ENCODE measurements at regions of chr3 and their contacts with region 1.

Region 1: GRCh38 chr3:56758539-56758981 is 43.2 kb downstream of the ARHGEF3 start:
- DNase-seq: no peak
- ATAC-seq: peak; percentile 71
- H3K4me3 Mint-ChIP-seq: peak overlapping the region; percentile 69
- H3K27ac Mint-ChIP-seq: peak overlapping the region; percentile 95
- H3K4me1 Mint-ChIP-seq: peaks cover 62% of the 10 kb centered on the region
- H3K27me3 Mint-ChIP-seq: no peaks in the 10 kb centered on the region
- CTCF ChIP-seq: no peak

Region 2: DNA sequence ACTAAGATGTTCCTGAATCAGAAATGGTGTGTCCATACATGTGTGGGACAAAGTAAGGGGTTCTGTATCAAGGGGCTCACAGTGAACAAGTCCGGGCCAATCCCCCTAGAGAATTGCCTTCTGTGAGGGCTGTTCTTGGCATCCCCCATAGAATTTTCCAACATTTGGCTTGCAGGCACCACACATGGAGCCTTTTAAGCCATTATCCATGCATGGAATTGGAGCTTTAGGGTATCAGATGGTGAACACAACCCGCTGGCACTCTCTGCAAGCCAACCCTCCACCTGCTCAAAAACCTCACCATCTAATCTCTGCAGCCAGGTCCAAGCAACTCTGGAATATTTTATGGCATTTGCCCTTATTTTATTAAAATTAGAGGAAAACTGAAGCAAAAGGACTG is 569.0 kb before region 1 on chr3:
- CTCF ChIA-PET with region 1: no interaction called
- POLR2A ChIA-PET with region 1: no interaction called
- intact Hi-C with region 1: no loop called
- DNase-seq: no peak
- ATAC-seq: no peak
- H3K4me3 Mint-ChIP-seq: no peak overlapping the region
- H3K27ac Mint-ChIP-seq: no peak overlapping the region
- H3K4me1 Mint-ChIP-seq: no peaks in the 10 kb centered on the region
- H3K27me3 Mint-ChIP-seq: peaks cover 4% of the 10 kb centered on the region
- CTCF ChIP-seq: no peak

Region 3: GRCh38 chr3:56775838-56776555 is 17.4 kb after region 1 on chr3:
- CTCF ChIA-PET with region 1: interaction called, 5 read pairs
- POLR2A ChIA-PET with region 1: interaction called, 6 read pairs
- intact Hi-C with region 1: loop called (anchors 2 kb)
- DNase-seq: no peak
- ATAC-seq: peak; percentile 40
- H3K4me3 Mint-ChIP-seq: no peak overlapping the region
- H3K27ac Mint-ChIP-seq: peak overlapping the region; percentile 53
- H3K4me1 Mint-ChIP-seq: peaks cover 53% of the 10 kb centered on the region
- H3K27me3 Mint-ChIP-seq: no peaks in the 10 kb centered on the region
- CTCF ChIP-seq: no peak

Region 4: GRCh38 chr3:56783644-56784447 is 25.3 kb after region 1 on chr3:
- CTCF ChIA-PET with region 1: interaction called, 6 read pairs
- POLR2A ChIA-PET with region 1: interaction called, 53 read pairs
- intact Hi-C with region 1: loop called (anchors 1 kb)
- DNase-seq: peak; percentile 40
- ATAC-seq: peak; percentile 99
- H3K4me3 Mint-ChIP-seq: peak overlapping the region; percentile 32
- H3K27ac Mint-ChIP-seq: peak overlapping the region; percentile 92
- H3K4me1 Mint-ChIP-seq: peaks cover 88% of the 10 kb centered on the region
- H3K27me3 Mint-ChIP-seq: no peaks in the 10 kb centered on the region
- CTCF ChIP-seq: no peak

Region 5: DNA sequence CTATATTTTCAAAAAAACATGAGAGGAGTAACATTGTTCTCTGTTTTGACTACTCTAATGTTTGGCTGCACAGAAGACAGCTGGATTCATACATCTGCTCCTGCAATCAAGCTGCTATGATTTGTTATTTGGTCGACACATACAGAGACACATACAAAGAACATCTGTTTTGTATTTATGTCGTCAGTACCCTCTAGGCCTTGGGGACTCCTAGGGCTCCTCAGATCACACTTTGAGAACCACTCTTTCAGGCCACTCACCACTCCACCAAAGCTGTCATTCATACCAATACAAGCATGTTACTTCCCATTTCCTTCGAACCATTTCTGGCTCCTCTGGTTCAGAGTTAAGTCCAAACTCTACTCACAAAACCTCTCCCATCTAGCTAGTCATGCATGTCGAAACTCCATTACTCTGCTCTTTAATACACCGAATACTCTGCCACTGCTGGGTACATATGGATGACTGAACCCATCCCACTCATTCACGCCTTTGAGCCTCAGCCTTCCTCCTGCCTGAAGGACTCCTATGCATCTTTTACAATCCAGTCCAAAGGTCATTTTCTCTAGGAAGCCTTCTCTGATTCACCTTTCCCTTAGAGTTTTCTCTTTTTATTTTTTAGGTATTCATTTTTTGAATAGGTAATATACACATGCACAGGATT is 146.1 kb after region 1 on chr3:
- CTCF ChIA-PET with region 1: no interaction called
- POLR2A ChIA-PET with region 1: no interaction called
- intact Hi-C with region 1: no loop called
- DNase-seq: no peak
- ATAC-seq: no peak
- H3K4me3 Mint-ChIP-seq: no peak overlapping the region
- H3K27ac Mint-ChIP-seq: no peak overlapping the region
- H3K4me1 Mint-ChIP-seq: peaks cover under 1% of the 10 kb centered on the region
- H3K27me3 Mint-ChIP-seq: no peaks in the 10 kb centered on the region
- CTCF ChIP-seq: no peak

Region 6: GRCh38 chr3:57078344-57078634 is 319.7 kb after region 1 on chr3:
- CTCF ChIA-PET with region 1: no interaction called
- POLR2A ChIA-PET with region 1: no interaction called
- intact Hi-C with region 1: loop called (anchors 5 kb)
- DNase-seq: peak; percentile 65
- ATAC-seq: peak; percentile 85
- H3K4me3 Mint-ChIP-seq: peak overlapping the region; percentile 78
- H3K27ac Mint-ChIP-seq: peak overlapping the region; percentile 62
- H3K4me1 Mint-ChIP-seq: peaks cover 20% of the 10 kb centered on the region
- H3K27me3 Mint-ChIP-seq: peaks cover 50% of the 10 kb centered on the region
- CTCF ChIP-seq: no peak

Region 7: DNA sequence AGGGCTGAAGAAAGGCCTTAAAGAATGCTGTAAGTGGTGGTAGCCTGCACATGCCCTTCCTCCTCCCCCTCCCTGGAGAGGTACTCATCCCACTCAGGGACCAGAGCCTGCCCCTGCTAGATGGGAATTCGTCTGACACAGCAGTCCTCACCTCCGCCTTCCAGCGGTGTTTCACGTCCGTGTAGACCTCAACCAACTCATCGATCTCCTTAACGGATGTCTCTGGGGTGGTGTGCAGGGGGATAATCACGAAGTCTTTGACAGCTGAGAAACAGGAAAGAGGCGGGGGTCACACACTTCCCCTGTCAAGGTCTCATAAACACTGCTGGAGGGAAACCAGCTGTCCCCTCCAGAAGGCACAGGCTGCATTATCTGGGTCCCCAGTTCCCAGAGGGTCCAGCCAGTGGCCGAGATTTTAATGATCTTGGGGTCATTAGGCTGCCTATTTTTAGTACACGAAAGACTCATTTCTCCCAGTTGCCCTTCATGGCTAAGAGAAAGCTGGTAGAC is 1442.3 kb after region 1 on chr3:
- CTCF ChIA-PET with region 1: no interaction called
- POLR2A ChIA-PET with region 1: interaction called, 13 read pairs
- intact Hi-C with region 1: no loop called
- DNase-seq: no peak
- ATAC-seq: no peak
- H3K4me3 Mint-ChIP-seq: peak overlapping the region; percentile 64
- H3K27ac Mint-ChIP-seq: peak overlapping the region; percentile 70
- H3K4me1 Mint-ChIP-seq: peaks cover 66% of the 10 kb centered on the region
- H3K27me3 Mint-ChIP-seq: no peaks in the 10 kb centered on the region
- CTCF ChIP-seq: no peak

Measured in activated B cell treated with CpG ODN at 0.5 μM for 24 hours (primary cell).